Ascending aorta (tissue), 2 donors: ENCODE measurements at regions of chr4 and their contacts with region 1.

Region 1: DNA sequence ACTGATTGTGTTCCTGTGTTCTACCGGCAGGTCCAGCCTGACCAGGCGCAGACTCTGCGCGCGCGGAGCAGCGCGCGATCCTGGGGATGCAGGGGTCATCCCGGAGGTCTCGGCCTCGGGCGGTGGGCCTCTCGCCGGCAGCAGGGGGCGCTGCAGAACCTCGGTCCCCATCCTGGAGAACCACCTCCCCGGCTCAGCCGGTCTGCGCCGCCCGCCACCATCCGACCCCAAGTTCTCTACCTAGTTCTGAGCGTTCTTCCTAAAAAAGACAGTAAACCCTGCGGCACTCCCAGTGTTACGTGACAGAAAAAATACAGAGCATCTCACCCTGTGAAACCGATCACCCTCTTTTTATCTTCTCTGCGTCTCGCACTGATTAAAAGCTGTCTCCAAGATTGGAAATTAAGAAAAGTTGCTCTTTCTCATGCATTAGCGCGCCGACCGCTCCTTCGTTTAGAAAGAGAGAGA is 1.6 kb downstream of the TRPC3 start:
- DNase-seq: peak in 1 of 2 donors; percentile 75
- H3K4me3 ChIP-seq: peak overlapping the region; percentile 66 to 83
- H3K27ac ChIP-seq: no peak overlapping the region
- H3K4me1 ChIP-seq: no peaks in the 10 kb centered on the region
- H3K27me3 ChIP-seq: no peaks in the 10 kb centered on the region
- CTCF ChIP-seq: peak; percentile 38 to 75 (median 70)

Region 2: DNA sequence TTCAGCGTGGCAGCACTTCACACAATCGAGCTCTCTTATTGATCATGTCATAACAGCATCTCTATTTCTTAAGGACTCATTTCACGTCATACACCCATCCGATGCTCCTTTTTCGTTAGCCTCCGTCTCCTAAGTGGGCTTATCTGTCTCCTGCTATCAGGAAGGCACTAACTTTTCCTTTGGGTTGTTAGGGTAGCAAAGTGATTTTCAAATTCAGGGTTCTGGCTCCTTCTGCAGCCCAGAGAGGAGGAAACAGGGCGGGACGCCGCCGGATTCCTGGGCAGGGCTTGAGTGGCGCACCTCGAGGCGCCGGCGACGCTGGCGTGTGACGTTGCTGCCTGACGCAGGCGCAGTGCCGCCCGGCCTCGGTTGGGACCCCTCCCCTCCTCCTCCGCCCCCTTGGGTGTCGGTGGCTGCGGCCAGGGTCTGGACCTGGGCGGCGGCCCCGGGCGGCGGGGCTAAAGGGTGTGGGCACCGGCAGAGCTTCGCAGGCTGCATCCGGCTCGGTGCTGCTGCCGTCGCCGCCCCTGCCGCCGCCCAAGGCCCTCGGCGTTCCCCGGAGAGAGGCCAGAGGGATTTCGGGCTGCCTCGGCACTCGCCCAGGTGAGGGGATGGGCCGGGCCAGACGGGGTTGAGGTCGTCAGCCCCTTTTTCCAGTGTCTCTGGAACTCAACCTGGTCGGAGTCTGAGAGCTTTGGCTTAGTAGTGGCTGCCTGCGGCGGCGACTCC is 201.9 kb after region 1 on chr4 and contains the start of gene BLTP1:
- intact Hi-C with region 1: loop called (anchors 2 kb)
- DNase-seq: peak; percentile 31 to 91
- H3K4me3 ChIP-seq: peak within 1 kb of the TSS; percentile 92 to 97
- H3K27ac ChIP-seq: peak within 1 kb of the TSS; percentile 97 to 98
- H3K4me1 ChIP-seq: peaks cover 0 to 12% of the 10 kb centered on the region in 2 donors
- H3K27me3 ChIP-seq: no peaks in the 10 kb centered on the region
- CTCF ChIP-seq: no peak
- total RNA-seq, gene BLTP1: 188 TPM